ENCODE measurements at regions of chr6 and their contacts with region 1.

Region 1: GRCh38 chr6:37180075-37180474 is 10.1 kb downstream of the PIM1 start:
- DNase-seq: no peak
- H3K4me3 ChIP-seq: no peak overlapping the region
- H3K27ac ChIP-seq: no peak overlapping the region
- H3K4me1 ChIP-seq: no peaks in the 10 kb centered on the region
- H3K27me3 ChIP-seq: no peaks in the 10 kb centered on the region
- CTCF ChIP-seq: no peak

Region 2: GRCh38 chr6:36858407-36858981 is 321.6 kb before region 1 on chr6:
- CTCF ChIA-PET with region 1: no interaction called
- POLR2A ChIA-PET with region 1: no interaction called
- intact Hi-C with region 1: no loop called
- DNase-seq: peak in 1 of 2 experiments; percentile 43
- H3K4me3 ChIP-seq: no peak overlapping the region
- H3K27ac ChIP-seq: peak overlapping the region; percentile 26; the same call in 1 of the 2 replicates
- H3K4me1 ChIP-seq: peaks cover 9% of the 10 kb centered on the region
- H3K27me3 ChIP-seq: no peaks in the 10 kb centered on the region
- CTCF ChIP-seq: no peak

Region 3: DNA sequence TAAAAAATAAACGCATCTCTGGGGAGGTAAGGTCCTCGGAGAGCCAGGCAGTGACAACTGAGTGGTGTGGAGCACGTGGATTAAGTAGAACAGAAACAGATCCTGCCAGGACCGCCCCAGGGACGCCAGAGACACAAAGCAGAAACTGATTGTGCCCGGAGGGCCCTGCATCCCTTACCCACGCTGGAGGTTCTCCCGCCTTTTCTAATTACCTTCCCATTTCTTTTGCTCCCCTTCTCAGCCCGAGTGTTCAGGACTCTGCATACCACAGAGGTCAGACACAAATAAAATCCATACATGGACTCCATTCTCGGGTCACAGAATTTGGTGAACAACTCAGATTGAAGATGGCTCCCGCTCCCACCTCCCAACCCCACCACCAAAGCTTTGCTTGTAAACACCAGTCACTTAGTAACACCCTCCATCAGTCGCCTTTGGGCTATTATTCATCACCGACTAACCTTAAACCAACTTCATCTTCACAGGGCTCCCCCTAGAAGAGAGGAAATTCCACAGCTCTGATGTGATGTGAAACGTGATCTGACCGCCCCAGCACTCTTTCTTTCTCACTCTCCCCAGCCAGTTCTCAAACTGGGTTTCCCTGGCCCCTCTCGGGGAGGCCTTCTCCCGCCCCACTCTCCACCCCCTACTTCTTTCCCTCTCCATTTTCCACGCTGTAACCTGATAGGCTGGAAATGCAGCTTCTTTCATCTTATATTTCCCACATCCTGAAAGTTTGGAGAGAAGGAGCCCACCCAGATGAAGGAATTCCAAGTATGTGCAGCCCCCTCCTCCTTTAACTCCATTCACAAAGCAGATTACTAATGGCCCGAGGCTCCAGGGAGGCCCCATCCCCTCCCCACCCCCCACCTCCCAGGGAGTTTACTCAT is 42.6 kb before region 1 on chr6:
- CTCF ChIA-PET with region 1: no interaction called
- POLR2A ChIA-PET with region 1: interaction called, 34 read pairs
- intact Hi-C with region 1: no loop called
- DNase-seq: peak; percentile 81 to 98
- H3K4me3 ChIP-seq: peak overlapping the region; percentile 56
- H3K27ac ChIP-seq: peak overlapping the region; percentile 98
- H3K4me1 ChIP-seq: peaks cover 88% of the 10 kb centered on the region
- H3K27me3 ChIP-seq: no peaks in the 10 kb centered on the region
- CTCF ChIP-seq: no peak